Naive thymus-derived CD8-positive, alpha-beta T cell (primary cell): ENCODE measurements at regions of chr19 and their contacts with region 1.

Region 1: DNA sequence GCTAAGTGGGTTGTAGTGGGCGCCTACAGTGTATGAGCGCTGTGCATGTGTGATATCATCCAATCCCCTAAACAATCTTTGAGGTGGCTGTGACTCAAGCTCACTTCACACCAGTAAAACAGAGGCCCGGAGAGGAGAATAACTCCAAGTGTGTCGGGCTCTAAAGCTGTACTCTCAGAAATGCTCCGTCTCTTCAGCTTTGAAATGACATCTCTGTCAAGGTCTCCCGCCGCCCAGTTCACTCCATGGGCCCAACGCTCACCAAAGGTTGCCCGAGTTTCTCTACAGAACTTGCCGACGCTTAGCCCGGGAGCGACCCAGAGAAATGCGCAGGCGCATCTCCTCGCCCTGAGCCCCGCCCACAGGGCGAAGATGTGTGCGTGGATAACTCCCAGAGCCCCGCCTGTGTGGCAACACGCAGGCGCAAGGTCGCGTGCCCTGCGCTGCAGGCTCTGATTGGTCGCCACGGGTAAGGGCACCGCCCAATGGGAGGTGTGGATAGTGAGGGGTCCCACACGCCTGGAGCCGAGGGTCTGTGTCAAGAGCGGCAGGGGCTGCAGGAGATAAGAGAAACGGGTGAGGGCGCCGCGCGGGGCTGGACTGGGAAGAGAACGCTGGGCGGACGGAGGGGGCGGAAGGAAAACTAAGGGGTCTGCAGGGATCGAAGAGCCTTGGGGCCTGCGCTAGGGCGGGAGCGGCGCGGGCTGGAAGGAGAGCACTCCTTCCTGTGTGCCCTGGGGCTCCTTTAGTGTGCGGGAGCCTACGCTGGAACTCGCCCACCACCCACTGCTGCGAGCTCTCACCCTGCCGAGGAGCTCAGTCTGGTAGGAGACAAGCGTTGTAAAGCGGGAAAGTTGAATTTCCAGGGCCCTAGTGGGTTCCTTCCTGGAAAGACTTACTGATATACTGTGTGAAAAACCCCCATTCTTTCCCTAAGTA is at the start of gene ZNF526:
- DNase-seq: peak; percentile 93 to 98 (median 96)
- ATAC-seq: peak; percentile 82 to 84
- H3K4me3 Mint-ChIP-seq: peak within 1 kb of the TSS; percentile 96 to 100 (median 100)
- H3K27ac Mint-ChIP-seq: peak within 1 kb of the TSS; percentile 94 to 100 (median 98)
- H3K4me1 Mint-ChIP-seq: peaks cover 36 to 69% (median 64%) of the 10 kb centered on the region in 4 donors
- H3K27me3 Mint-ChIP-seq: peaks cover 0 to 2% (median 0%) of the 10 kb centered on the region in 5 donors
- polyA plus RNA-seq, gene ZNF526: 3.9 to 8.1 (median 4.5) TPM

Region 2: DNA sequence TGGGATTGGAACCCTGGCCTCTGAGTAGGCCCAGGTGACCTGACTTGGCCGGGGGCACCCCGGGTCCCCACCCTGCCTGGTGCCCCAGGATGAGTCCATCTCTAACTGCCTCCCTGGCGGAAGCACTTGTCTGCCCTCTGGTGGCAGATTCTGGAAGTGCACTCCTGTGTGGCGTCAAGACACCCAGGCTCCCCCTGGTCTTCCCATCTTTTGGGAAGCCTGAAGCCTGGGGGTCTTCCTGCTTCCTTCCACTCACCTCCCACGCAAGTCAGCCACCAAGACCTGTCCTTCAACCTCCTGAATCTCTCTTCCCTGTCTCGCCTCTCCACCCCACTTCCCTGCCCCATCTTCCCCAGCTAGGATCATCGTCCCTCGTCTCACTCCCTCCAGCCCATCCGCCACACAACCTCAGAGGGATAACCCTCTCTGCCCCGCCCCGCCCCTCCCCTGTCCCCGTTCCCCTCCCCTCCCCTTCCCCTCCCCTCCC is 268.4 kb before region 1 on chr19:
- POLR2A ChIA-PET with region 1: no interaction called
- DNase-seq: peak; percentile 69 to 93 (median 84)
- ATAC-seq: peak; percentile 86 to 88
- H3K4me3 Mint-ChIP-seq: peak overlapping the region in 4 of 10 donors; percentile 22 to 66 (median 43)
- H3K27ac Mint-ChIP-seq: peak overlapping the region; percentile 57 to 97 (median 86)
- H3K4me1 Mint-ChIP-seq: peaks cover 17 to 35% (median 26%) of the 10 kb centered on the region in 4 donors
- H3K27me3 Mint-ChIP-seq: no peaks in the 10 kb centered on the region

Region 3: DNA sequence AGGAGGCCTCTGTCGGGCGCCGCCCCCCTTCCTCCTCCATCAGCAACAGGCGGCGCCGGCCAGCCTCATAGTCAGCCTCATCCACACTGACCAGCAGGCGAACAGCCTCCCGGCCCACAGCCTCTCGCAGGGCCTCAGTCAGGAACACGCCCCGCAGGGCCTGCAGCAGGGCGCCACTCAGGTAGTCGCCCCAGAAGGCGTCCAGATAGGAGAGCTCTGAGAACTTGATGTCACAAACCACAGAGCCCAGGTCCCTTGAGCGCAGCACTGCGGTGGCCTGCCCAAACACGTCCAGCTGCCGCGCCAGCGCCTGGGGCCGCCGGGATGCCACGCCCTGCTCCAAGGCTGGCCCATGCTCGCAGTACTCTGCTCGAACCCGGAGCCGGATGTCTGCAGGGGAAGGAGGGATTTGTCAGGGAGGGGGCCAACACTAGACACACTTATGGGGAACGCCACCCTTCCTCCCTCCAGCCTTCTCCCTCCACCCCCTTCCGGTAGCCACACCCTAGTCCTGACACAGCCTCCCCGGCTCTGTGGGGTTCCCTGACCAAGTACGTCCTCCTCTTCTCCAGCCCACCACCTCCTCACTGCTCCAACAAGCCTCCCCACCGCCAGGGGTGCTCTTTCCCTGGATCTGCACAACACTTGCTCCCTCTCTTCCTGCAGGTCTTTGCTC is 20.5 kb before region 1 on chr19:
- POLR2A ChIA-PET with region 1: interaction called, 62 read pairs
- DNase-seq: peak in 8 of 10 donors; percentile 23 to 77 (median 47)
- ATAC-seq: peak; percentile 50 to 53
- H3K4me3 Mint-ChIP-seq: peak overlapping the region; percentile 73 to 89 (median 86)
- H3K27ac Mint-ChIP-seq: peak overlapping the region; percentile 88 to 97 (median 92)
- H3K4me1 Mint-ChIP-seq: peaks cover 58 to 90% (median 83%) of the 10 kb centered on the region in 4 donors
- H3K27me3 Mint-ChIP-seq: no peaks in the 10 kb centered on the region